ENCODE measurements at regions of chr1 and their contacts with region 1.

Region 1: GRCh38 chr1:21539933-21540332 is 30.7 kb downstream of the ALPL start:
- DNase-seq: peak in 5 of 10 donors; percentile 14 to 58 (median 37)
- H3K4me3 ChIP-seq: no peak overlapping the region
- H3K27ac ChIP-seq: no peak overlapping the region
- H3K27me3 ChIP-seq: no peaks in the 10 kb centered on the region
- CTCF ChIP-seq: peak in 22 of 56 donors; percentile 7 to 47 (median 21)

Region 2: DNA sequence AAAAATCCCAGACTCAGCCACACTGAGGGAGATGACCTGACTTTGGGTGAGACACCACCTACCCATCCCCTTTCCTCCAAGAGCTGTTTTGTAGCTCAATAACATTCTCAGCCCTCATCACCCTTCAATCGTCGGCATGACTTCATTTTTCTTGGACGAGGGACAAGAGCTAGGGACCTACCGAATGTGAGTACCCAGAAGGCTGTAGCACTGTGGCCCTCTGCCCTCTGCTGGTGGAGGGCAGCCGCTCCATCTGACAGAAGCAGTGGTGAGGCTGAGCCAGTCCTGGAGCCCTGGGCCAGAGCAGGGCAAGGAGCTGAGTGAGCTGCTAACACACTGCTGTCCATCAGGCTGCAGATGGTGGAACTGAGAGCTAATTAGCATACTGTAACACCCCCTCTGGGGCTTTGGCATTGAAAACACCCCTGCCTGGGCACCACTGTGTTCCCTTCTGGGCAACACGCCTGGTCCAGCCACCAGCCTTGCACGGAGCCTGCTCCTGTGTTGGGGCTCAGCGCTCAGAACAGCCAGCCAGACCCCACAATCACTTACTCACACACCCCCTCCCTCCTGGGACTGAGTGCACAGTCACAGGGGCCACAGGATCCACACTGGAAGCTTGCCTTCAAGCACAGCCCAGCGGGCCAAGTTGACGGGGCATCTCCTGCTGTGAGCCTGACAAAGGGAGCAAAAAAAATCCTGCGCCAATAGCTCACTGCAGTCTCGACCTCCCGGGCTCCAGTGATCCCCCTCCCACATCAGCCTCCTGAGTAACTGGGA is 49.0 kb before region 1 on chr1:
- intact Hi-C with region 1: no loop called
- DNase-seq: peak in 1 of 10 donors; percentile 14
- H3K4me3 ChIP-seq: no peak overlapping the region
- H3K27ac ChIP-seq: no peak overlapping the region
- H3K27me3 ChIP-seq: peaks cover 0 to 9% (median 0%) of the 10 kb centered on the region in 45 donors
- CTCF ChIP-seq: peak in 47 of 56 donors; percentile 8 to 53 (median 36)

Region 3: DNA sequence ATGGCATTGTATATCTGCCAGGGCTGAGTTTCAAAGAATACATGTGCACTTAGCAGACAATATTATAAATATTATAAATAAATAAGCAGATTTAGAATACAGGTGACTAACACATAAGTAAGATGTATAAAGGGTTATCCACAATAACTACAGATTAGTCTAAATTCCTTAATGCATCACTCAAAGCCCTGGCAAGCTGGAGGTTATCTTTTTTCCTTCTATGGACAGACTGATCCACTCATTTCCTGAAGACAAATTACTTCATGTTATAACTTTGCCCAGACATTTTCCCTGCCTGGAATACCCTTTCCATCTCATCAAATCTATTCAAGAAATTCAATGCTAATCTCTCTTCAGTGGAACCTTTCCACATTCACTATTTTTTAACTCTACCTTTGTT is 1589.9 kb after region 1 on chr1:
- intact Hi-C with region 1: loop called in 1 of 2 experiments (anchors 10 kb)
- DNase-seq: no peak
- H3K4me3 ChIP-seq: no peak overlapping the region
- H3K27ac ChIP-seq: no peak overlapping the region
- H3K27me3 ChIP-seq: no peaks in the 10 kb centered on the region
- CTCF ChIP-seq: no peak

Measured in dorsolateral prefrontal cortex (tissue), 120 donors.